Endothelial cell of umbilical vein (primary cell): ENCODE measurements at regions of chr6 and their contacts with region 1.

Region 1: GRCh38 chr6:28648035-28648877 is 122.6 kb downstream of the GPX5 start:
- DNase-seq: peak; percentile 86
- H3K4me3 ChIP-seq: peak overlapping the region; percentile 47 to 97 (median 70)
- H3K27ac ChIP-seq: peak overlapping the region; percentile 14
- H3K4me1 ChIP-seq: peaks cover 3% of the 10 kb centered on the region
- H3K27me3 ChIP-seq: peaks cover 7 to 20% of the 10 kb centered on the region in 2 experiments
- CTCF ChIP-seq: no peak
- POLR2A ChIP-seq: no peak

Region 2: DNA sequence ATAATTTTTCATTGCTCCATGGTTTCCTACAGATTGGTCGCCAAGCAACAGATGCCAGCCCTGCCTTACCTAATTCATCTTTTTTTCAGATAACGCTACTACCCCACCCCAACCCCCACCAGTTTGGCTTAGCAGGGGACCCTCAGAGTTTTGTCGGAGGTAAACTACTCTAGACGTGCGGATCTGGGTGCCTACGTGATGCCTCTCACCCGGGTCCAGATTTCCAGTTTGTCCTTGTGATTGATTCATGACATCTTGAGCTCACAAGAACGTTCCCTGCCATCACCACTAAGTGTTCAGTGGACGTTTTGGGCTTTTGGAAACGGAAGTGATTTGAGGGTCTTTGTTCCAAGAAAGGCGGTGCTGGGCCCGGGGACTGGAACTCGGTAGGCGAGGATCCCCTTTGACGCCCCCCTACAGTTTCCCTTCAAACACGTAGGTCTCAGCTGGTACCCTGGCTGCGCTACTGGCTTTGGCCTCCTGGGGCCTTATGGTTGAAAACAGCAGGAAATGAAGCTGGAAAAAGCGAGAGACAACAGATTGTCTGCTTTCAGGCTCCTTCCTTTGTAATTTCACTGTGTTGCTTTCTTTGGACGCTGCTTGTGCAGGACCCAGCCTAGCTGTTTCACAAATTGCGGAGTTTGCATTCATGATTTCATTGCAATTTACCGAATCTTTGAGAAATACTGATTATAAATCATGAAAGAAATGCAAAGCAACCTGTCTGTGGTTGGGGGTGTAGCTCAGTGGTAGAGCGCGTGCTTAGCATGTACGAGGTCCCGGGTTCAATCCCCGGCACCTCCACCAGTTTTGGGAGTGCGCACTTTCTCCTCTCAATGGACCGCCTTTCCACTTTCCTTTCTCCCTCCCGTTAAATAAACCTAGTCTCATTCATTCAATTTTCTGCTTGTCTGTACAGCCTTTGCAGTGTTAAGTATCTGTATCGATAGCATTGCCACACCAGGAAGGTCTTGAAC is 41.5 kb before region 1 on chr6:
- CTCF ChIA-PET with region 1: no interaction called
- POLR2A ChIA-PET with region 1: no interaction called
- dilution Hi-C with region 1: no loop called
- intact Hi-C with region 1: loop called (anchors 2 kb)
- DNase-seq: peak; percentile 53
- H3K4me3 ChIP-seq: peak overlapping the region in 2 of 3 experiments; percentile 7 to 61
- H3K27ac ChIP-seq: no peak overlapping the region
- H3K4me1 ChIP-seq: no peaks in the 10 kb centered on the region
- H3K27me3 ChIP-seq: no peaks in the 10 kb centered on the region
- CTCF ChIP-seq: peak; percentile 36 to 37
- POLR2A ChIP-seq: no peak

Region 3: DNA sequence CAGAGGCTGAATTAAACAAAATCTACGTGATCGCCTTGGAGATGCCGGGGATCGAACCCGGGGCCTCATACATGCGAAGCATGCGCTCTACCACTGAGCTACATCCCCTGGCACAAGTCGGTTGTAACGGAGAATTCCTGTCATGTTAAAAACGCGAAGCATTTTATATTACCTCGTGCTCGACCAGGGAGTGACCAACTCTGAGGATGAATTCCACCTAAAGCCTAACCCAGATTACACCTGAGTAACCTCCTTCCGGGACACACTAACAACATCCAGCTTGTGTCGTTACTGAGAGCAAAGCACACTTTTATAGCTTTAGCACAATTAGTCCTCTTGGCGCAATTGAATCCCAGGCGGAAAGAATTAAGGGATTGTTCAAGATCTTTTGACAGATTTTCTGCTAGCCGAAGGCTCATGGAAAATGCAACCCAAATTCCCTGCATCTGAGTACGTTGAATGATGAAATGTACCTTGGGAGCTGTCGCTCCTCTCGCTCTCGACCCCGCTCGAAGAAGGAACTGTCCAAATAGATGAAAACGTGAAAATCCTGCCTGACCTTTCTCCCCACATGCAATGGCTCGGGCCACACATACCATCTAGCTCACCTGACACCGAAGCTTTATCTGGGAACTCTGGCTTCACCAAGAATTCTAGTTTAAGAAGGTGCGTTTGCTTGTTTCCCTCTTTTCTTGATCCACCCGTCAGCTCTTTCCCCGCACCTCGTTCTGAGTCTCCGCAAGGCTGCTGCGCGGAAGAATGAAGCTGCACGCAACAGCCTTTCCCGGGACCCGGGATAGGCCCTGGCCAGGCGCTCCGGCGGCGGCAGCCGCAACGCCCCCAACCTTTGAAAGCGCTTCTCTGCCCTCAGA is 25.8 kb after region 1 on chr6:
- CTCF ChIA-PET with region 1: interaction called, 3 read pairs
- POLR2A ChIA-PET with region 1: no interaction called
- dilution Hi-C with region 1: no loop called
- intact Hi-C with region 1: loop called (anchors 1 kb)
- DNase-seq: peak; percentile 70
- H3K4me3 ChIP-seq: peak overlapping the region; percentile 1 to 74 (median 3)
- H3K27ac ChIP-seq: no peak overlapping the region
- H3K4me1 ChIP-seq: peaks cover 8% of the 10 kb centered on the region
- H3K27me3 ChIP-seq: peaks cover 5 to 6% of the 10 kb centered on the region in 2 experiments
- CTCF ChIP-seq: no peak
- POLR2A ChIP-seq: no peak